Pancreas (tissue), 10 donors: ENCODE measurements at regions of chr10 and their contacts with region 1.

Region 1: GRCh38 chr10:72331601-72332422 is 22.9 kb downstream of the DNAJB12 start:
- DNase-seq: peak; percentile 90 to 97 (median 92)
- ATAC-seq: peak; percentile 51 to 70 (median 62)
- H3K4me3 ChIP-seq: peak overlapping the region in 1 of 4 donors; percentile 11
- H3K27ac ChIP-seq: peak overlapping the region; percentile 81 to 97 (median 87)
- H3K4me1 ChIP-seq: peaks cover 78 to 89% (median 88%) of the 10 kb centered on the region in 3 donors
- H3K27me3 ChIP-seq: no peaks in the 10 kb centered on the region
- CTCF ChIP-seq: peak in 3 of 4 donors; percentile 29 to 46 (median 32)

Region 2: GRCh38 chr10:72126184-72126871 is 205.5 kb before region 1 on chr10:
- intact Hi-C with region 1: loop called in 1 of 3 experiments (anchors 5 kb)
- DNase-seq: no peak
- ATAC-seq: peak in 3 of 4 donors; percentile 71 to 77 (median 73)
- H3K4me3 ChIP-seq: no peak overlapping the region
- H3K27ac ChIP-seq: no peak overlapping the region
- H3K4me1 ChIP-seq: no peaks in the 10 kb centered on the region
- H3K27me3 ChIP-seq: no peaks in the 10 kb centered on the region
- CTCF ChIP-seq: peak in 1 of 4 donors; percentile 27

Region 3: DNA sequence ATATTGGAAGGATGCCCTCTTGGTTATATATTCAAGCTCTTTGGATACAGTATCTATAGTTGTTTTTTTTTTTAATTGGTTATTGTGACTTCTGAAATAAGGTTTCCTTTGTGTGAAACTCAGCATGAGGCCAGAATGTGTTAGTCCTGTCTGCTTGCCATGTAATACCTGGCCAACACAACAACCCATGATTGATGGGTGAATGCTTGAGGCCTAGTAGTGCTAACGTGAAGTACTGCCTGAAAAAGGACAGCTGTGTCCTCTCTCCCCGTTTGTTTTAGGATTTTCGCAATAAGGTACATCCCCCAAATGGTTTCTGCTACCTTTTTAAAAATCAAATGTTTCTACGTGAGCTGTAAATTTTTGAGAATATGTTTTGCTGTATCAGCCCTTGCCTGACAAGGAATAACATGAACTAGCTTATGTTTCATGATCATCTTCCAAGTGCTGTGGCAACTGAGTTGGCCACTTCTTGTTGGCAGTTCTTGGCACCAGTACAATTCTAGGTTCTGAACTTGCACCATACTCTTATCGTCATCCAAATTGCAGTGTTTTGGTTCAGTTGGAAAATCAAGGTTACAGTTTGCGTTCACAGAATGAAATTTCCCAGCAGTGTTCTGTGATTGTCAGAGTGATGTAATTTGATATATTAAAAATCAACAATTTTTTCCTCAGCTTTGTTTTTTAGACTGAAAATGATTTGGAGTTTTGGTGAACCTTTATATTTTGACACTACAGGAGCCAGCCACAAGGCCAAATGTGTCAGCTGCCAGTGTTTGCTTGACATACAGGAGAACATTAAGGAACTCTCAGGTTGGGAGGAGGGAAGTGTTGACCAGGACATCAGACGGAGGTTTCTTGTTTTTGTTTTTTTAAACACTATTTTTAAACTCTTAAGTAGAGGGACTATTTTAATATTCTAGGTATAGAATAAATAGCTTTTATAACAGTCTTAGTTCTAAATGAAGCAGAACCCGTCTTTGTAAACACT is 102.3 kb before region 1 on chr10:
- intact Hi-C with region 1: loop called in 2 of 3 experiments (anchors 10 kb)
- DNase-seq: peak in 5 of 6 donors; percentile 39 to 74 (median 54)
- ATAC-seq: peak; percentile 81 to 90 (median 88)
- H3K4me3 ChIP-seq: no peak overlapping the region
- H3K27ac ChIP-seq: peak overlapping the region; percentile 47 to 93 (median 82)
- H3K4me1 ChIP-seq: peaks cover 54 to 83% (median 71%) of the 10 kb centered on the region in 3 donors
- H3K27me3 ChIP-seq: no peaks in the 10 kb centered on the region
- CTCF ChIP-seq: no peak

Region 4: DNA sequence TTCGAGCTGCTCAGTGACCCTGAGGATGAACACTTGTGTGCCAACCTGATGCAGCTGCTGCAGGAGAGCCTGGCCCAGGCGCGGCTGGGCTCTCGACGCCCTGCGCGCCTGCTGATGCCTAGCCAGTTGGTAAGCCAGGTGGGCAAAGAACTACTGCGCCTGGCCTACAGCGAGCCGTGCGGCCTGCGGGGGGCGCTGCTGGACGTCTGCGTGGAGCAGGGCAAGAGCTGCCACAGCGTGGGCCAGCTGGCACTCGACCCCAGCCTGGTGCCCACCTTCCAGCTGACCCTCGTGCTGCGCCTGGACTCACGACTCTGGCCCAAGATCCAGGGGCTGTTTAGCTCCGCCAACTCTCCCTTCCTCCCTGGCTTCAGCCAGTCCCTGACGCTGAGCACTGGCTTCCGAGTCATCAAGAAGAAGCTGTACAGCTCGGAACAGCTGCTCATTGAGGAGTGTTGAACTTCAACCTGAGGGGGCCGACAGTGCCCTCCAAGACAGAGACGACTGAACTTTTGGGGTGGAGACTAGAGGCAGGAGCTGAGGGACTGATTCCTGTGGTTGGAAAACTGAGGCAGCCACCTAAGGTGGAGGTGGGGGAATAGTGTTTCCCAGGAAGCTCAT is 57.0 kb before region 1 on chr10:
- intact Hi-C with region 1: loop called in 1 of 3 experiments (anchors 5 kb)
- DNase-seq: peak; percentile 76 to 93 (median 86)
- ATAC-seq: peak; percentile 10 to 41 (median 33)
- H3K4me3 ChIP-seq: peak overlapping the region; percentile 81 to 99 (median 94)
- H3K27ac ChIP-seq: peak overlapping the region; percentile 96 to 99 (median 96)
- H3K4me1 ChIP-seq: peaks cover 5 to 14% (median 6%) of the 10 kb centered on the region in 3 donors
- H3K27me3 ChIP-seq: no peaks in the 10 kb centered on the region
- CTCF ChIP-seq: peak; percentile 40 to 53 (median 50)